Mammary epithelial cell (primary cell): ENCODE measurements at regions of chr13 and their contacts with region 1.

Region 1: GRCh38 chr13:32019612-32020233 is 11.9 kb upstream of the FRY start:
- DNase-seq: peak; percentile 30
- H3K4me3 ChIP-seq: no peak overlapping the region
- H3K27ac ChIP-seq: no peak overlapping the region
- H3K4me1 ChIP-seq: no peaks in the 10 kb centered on the region
- H3K27me3 ChIP-seq: no peaks in the 10 kb centered on the region
- CTCF ChIP-seq: peak; percentile 47 to 79

Region 2: DNA sequence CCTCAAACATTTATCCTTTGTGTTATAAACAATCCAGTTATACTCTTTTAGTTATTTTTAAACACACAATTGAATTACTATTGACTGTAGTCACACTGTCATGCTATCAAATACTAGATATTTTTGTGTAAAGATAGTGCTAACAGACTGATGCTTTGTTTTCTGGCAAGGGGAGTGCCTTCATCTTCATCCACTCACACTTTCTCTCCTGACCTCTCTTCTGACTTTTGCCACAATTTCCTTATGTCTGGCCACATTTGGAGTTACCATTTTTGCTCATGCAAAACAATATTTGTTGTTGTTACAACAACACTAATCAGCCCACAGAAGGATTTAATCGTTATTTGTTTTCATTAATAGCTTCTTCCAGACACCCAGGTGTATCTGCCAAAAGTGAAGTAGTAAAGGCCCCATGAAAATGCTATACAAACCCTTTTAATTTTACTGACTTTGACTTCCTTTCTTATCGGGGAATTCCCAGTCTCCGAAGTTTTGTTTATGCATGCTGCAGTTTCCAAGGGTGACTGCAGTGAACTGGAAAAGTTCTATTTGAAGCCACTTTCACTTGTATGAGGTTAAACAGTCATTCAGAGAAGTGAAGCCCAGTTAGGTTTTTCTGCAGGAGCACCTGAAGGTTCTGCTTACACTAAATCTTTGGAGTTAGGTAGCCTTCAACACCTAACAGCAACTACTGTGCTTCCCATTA is 54.2 kb before region 1 on chr13:
- CTCF ChIA-PET with region 1: no interaction called
- dilution Hi-C with region 1: no loop called
- in situ Hi-C with region 1: no loop called
- intact Hi-C with region 1: no loop called
- DNase-seq: peak; percentile 59
- H3K4me3 ChIP-seq: no peak overlapping the region
- H3K27ac ChIP-seq: no peak overlapping the region
- H3K4me1 ChIP-seq: peaks cover 4% of the 10 kb centered on the region
- H3K27me3 ChIP-seq: no peaks in the 10 kb centered on the region
- CTCF ChIP-seq: no peak

Region 3: DNA sequence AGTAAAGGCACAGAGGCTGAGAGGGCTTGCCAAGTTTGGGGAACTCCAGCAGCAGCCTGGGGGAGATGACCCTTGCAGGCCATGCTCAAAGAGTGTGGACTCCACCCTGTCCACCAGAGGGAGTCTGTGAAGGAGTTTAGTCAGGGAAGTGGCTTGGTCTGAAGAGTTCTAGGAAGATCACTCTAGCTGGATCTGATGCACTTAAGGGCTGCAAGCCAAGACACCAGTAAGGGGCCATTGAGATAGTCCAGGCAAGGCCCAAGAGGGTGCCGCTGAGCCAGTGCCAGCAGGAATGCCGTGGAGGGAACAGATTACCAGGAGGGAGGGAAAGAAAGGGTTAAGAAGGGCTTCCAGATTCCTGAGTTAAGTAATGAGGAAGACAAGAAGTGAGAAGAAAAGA is 226.7 kb after region 1 on chr13:
- CTCF ChIA-PET with region 1: no interaction called
- dilution Hi-C with region 1: no loop called
- in situ Hi-C with region 1: no loop called
- intact Hi-C with region 1: loop called (anchors 5 kb)
- DNase-seq: peak; percentile 61
- H3K4me3 ChIP-seq: no peak overlapping the region
- H3K27ac ChIP-seq: no peak overlapping the region
- H3K4me1 ChIP-seq: no peaks in the 10 kb centered on the region
- H3K27me3 ChIP-seq: no peaks in the 10 kb centered on the region
- CTCF ChIP-seq: peak; percentile 87 to 90

Region 4: GRCh38 chr13:32267836-32268439 is 248.2 kb after region 1 on chr13:
- CTCF ChIA-PET with region 1: no interaction called
- dilution Hi-C with region 1: no loop called
- in situ Hi-C with region 1: no loop called
- intact Hi-C with region 1: no loop called
- DNase-seq: peak; percentile 58
- H3K4me3 ChIP-seq: no peak overlapping the region
- H3K27ac ChIP-seq: no peak overlapping the region
- H3K4me1 ChIP-seq: peaks cover 6% of the 10 kb centered on the region
- H3K27me3 ChIP-seq: no peaks in the 10 kb centered on the region
- CTCF ChIP-seq: peak; percentile 91 to 99

Region 5: GRCh38 chr13:32315238-32316027 is 295.7 kb after region 1 on chr13 and contains the starts of genes BRCA2 and ZAR1L:
- CTCF ChIA-PET with region 1: no interaction called
- dilution Hi-C with region 1: no loop called
- in situ Hi-C with region 1: loop called (anchors 10 to 25 kb)
- intact Hi-C with region 1: loop called (anchors 1 kb)
- DNase-seq: peak; percentile 83
- H3K4me3 ChIP-seq: peak within 1 kb of the TSS; percentile 70 to 92 (median 70)
- H3K27ac ChIP-seq: peak within 1 kb of the TSS; percentile 95
- H3K4me1 ChIP-seq: peaks cover 5% of the 10 kb centered on the region
- H3K27me3 ChIP-seq: no peaks in the 10 kb centered on the region
- CTCF ChIP-seq: no peak
- total RNA-seq, gene BRCA2: 3.0 to 16.0 TPM
- total RNA-seq, gene ZAR1L: not detected